Left cardiac atrium (tissue), 4 donors: ENCODE measurements at regions of chr12 and their contacts with region 1.

Region 1: DNA sequence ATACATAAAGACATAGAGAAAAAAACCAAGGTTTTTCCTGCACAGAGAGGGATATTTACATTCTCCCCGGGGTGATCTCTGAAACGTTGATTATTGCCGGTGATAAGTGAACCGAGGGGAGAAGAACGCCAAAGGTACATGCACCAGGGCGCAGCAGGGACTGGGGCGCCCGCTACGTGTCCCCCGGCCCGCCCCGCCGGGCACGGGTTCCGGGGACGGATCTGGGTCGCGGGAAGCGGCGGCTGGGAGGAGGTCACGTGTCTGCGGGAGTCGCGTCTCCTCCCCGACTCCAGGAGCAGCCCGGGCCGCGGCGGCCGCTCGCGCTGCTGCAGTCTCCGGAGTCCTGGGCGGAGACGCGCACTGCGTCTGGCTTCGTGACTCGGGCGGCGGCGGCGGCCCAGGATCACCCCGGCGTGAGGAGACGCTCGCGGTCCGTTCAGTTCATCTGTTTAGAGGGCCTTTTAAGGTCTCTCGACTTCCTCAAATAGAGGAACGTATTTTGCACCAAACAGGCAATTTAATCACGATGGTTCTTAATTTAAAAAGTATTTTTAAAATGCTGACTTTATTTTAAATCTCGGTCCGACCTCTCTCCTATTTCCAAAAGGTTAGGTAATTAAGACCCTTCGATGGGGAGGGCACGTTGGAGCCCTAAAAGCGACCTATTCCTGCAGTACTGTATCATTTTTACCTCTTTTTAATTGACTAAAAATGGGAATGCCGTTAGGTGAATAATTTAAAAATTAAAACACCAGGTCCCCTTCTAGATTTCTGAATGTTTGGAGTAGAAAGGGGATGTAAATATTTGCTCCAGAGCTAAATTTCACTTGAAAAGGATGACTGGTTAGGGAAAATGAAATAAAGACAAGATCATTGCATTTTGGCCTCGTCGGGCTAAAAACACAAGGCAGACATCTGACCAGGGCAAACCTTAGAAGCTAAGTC is 1.8 kb upstream of the BHLHE41 start:
- DNase-seq: peak; percentile 89
- ATAC-seq: peak; percentile 74 to 82

Region 2: DNA sequence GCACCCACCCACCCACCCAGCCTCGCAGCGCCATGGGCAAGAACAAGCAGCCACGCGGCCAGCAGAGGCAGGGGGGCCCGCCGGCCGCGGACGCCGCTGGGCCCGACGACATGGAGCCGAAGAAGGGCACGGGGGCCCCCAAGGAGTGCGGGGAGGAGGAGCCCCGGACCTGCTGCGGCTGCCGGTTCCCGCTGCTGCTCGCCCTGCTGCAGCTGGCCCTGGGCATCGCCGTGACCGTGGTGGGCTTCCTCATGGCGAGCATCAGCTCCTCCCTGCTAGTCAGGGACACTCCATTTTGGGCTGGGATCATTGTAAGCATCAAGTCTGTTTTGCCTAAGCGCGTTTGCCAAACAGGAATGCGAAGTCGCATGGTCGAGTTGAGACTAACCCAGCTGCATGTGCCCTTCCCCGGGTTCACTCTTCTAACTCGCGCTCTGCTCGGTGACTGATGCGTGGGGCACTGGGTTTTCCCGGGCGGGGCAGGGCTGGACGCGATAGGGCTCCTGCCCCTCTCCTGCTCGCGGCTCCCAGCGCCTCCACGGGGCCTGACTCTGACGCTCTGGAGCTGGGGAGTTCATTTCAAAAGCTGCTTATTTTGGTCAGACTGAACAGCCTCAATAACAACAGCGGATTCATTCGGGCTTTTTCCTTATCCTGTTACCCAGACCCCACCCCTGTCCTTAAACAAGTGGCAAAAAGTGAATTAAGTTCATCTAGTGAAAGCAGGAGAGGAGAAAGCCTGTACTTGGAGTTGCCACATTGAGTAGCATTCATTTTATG is 69.2 kb after region 1 on chr12:
- intact Hi-C with region 1: loop called in 1 of 2 experiments (anchors 5 kb)
- DNase-seq: peak; percentile 66
- ATAC-seq: peak; percentile 88 to 89

Region 3: GRCh38 chr12:26422839-26423398 is 296.3 kb after region 1 on chr12:
- intact Hi-C with region 1: loop called in 1 of 2 experiments (anchors 5 kb)
- DNase-seq: no peak
- ATAC-seq: no peak